ENCODE measurements at regions of chr7 and their contacts with region 1.

Region 1: DNA sequence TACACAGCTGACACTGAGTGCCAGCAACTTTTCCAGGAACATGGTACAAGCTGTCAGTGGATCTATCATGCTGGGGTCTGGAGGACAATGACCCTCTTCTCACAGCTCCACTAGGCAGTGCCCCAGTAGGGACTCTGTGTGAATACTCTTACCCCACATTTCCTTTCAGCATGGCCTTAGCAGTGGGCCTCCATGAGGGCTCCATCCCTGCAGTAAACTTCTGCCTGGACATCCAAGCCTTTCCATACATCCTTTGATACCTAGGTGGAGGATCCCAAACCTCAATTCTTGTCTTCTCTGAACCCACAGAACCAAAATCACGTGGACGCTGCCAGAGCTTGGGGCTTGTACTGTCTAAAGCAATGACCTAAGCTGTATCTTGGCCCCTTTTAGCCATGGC is 116.8 kb downstream of the IQUB start:
- DNase-seq: no peak
- H3K4me3 ChIP-seq: no peak overlapping the region
- H3K4me3 Mint-ChIP-seq: no peak overlapping the region
- H3K27ac ChIP-seq: no peak overlapping the region
- H3K27ac Mint-ChIP-seq: no peak overlapping the region
- H3K4me1 ChIP-seq: no peaks in the 10 kb centered on the region
- H3K4me1 Mint-ChIP-seq: no peaks in the 10 kb centered on the region
- H3K27me3 ChIP-seq: no peaks in the 10 kb centered on the region
- H3K27me3 Mint-ChIP-seq: no peaks in the 10 kb centered on the region

Region 2: DNA sequence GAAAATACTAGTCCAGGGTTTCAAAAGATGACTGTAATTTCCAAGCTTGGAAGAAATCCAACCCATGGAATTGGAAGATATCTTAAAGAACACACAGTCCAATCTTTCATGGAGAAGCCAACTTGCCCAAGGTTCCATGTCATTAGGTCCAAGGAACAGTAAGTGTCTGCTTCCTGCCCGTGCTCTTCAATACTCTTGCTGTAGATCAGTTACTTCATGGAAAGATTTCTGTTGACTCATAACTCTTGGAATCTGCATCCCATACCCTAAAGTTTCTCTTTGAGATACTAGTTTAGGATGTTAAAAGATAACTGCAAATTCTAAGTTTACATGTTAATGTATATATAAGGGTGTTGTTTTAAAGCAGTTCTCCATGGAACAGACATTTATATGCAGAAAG is 89.9 kb before region 1 on chr7:
- CTCF ChIA-PET with region 1: no interaction called
- POLR2A ChIA-PET with region 1: no interaction called
- DNase-seq: no peak
- H3K4me3 ChIP-seq: no peak overlapping the region
- H3K4me3 Mint-ChIP-seq: no peak overlapping the region
- H3K27ac ChIP-seq: no peak overlapping the region
- H3K27ac Mint-ChIP-seq: no peak overlapping the region
- H3K4me1 ChIP-seq: no peaks in the 10 kb centered on the region
- H3K4me1 Mint-ChIP-seq: no peaks in the 10 kb centered on the region
- H3K27me3 ChIP-seq: no peaks in the 10 kb centered on the region
- H3K27me3 Mint-ChIP-seq: peaks cover 0 to 1% of the 10 kb centered on the region in 2 donors

Region 3: DNA sequence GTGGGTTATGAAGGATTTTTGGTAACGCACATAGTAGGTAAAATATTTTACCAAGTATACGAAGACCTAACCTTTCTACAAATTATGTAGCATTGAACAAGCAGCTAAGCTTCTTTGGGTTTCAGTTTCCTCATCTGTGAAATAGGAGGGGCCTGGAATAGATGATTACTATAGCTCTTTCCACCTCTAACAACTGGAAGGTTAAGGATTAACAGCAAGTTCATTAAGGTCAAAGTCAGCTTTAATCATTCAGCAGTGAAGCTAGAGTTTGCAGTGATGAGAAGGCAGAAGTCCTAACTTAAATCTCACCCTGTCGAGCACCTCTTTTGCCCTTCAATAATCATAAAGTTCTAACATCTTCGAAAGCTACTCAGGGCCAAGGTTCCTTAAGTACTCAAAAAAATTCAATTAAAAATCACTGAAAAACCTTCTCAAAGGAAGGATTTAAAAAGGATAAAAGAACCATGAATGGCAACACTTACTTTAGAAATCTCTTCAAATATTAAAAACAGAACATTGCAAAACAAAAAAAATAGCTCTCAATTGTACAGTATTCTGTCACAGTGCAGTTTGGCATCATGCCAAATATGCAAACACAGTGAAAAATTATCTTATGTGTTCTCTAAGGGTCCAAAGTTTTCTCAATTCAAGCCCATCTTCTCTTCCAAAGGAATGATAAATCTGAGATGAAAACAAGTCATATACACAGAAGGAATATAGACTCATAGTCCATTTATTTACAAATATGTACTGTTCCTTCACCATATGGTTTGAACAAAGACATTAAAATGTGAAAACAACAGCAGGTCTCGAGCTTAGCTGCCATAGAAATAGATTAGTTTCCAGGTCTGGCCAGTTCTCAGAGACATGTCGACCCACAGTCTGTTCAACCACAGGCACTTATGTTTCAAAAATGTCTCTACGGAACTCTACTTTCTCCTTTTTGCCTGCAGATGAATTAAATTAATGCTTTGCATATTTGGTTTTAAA is 65.8 kb before region 1 on chr7:
- CTCF ChIA-PET with region 1: no interaction called
- POLR2A ChIA-PET with region 1: interaction called, 10 read pairs
- DNase-seq: no peak
- H3K4me3 ChIP-seq: no peak overlapping the region
- H3K4me3 Mint-ChIP-seq: no peak overlapping the region
- H3K27ac ChIP-seq: no peak overlapping the region
- H3K27ac Mint-ChIP-seq: no peak overlapping the region
- H3K4me1 ChIP-seq: no peaks in the 10 kb centered on the region
- H3K4me1 Mint-ChIP-seq: no peaks in the 10 kb centered on the region
- H3K27me3 ChIP-seq: no peaks in the 10 kb centered on the region
- H3K27me3 Mint-ChIP-seq: no peaks in the 10 kb centered on the region

Region 4: GRCh38 chr7:123433665-123434064 is 16.1 kb after region 1 on chr7:
- CTCF ChIA-PET with region 1: no interaction called
- POLR2A ChIA-PET with region 1: no interaction called
- DNase-seq: no peak
- H3K4me3 ChIP-seq: no peak overlapping the region
- H3K4me3 Mint-ChIP-seq: no peak overlapping the region
- H3K27ac ChIP-seq: no peak overlapping the region
- H3K27ac Mint-ChIP-seq: no peak overlapping the region
- H3K4me1 ChIP-seq: no peaks in the 10 kb centered on the region
- H3K4me1 Mint-ChIP-seq: no peaks in the 10 kb centered on the region
- H3K27me3 ChIP-seq: no peaks in the 10 kb centered on the region
- H3K27me3 Mint-ChIP-seq: no peaks in the 10 kb centered on the region

Region 5: DNA sequence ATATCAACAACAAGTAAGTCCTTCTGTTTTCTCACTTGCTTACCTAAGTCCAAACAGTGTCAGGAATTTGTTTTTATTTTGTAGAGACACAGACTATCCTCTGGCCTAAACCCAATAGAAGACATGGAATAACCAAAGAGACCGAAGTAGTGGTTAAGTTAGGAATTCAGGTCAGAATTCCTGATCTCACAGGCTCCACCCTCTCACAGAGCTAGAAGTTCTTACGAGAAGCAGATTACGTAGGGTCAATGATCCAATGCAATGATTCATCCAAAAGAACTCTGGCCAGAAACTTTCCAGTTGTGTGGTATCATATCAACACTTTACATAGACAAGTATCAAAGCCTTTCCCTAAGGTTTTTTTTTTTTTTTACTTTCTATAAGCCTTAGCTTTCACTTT is 43.0 kb after region 1 on chr7:
- CTCF ChIA-PET with region 1: no interaction called
- POLR2A ChIA-PET with region 1: no interaction called
- DNase-seq: no peak
- H3K4me3 ChIP-seq: no peak overlapping the region
- H3K4me3 Mint-ChIP-seq: no peak overlapping the region
- H3K27ac ChIP-seq: no peak overlapping the region
- H3K27ac Mint-ChIP-seq: no peak overlapping the region
- H3K4me1 ChIP-seq: no peaks in the 10 kb centered on the region
- H3K4me1 Mint-ChIP-seq: no peaks in the 10 kb centered on the region
- H3K27me3 ChIP-seq: no peaks in the 10 kb centered on the region
- H3K27me3 Mint-ChIP-seq: peaks cover 0 to 10% of the 10 kb centered on the region in 2 donors

Measured in CD8-positive, alpha-beta memory T cell (primary cell).